ENCODE measurements at regions of chr2 and their contacts with region 1.

Region 1: GRCh38 chr2:19863303-19864041 is 38.3 kb downstream of the TTC32 start:
- DNase-seq: peak; percentile 79 to 93
- ATAC-seq: peak; percentile 89
- H3K4me3 ChIP-seq: no peak overlapping the region
- H3K27ac ChIP-seq: peak overlapping the region in 1 of 2 donors; percentile 9
- H3K4me1 ChIP-seq: no peaks in the 10 kb centered on the region
- H3K27me3 ChIP-seq: no peaks in the 10 kb centered on the region

Region 2: DNA sequence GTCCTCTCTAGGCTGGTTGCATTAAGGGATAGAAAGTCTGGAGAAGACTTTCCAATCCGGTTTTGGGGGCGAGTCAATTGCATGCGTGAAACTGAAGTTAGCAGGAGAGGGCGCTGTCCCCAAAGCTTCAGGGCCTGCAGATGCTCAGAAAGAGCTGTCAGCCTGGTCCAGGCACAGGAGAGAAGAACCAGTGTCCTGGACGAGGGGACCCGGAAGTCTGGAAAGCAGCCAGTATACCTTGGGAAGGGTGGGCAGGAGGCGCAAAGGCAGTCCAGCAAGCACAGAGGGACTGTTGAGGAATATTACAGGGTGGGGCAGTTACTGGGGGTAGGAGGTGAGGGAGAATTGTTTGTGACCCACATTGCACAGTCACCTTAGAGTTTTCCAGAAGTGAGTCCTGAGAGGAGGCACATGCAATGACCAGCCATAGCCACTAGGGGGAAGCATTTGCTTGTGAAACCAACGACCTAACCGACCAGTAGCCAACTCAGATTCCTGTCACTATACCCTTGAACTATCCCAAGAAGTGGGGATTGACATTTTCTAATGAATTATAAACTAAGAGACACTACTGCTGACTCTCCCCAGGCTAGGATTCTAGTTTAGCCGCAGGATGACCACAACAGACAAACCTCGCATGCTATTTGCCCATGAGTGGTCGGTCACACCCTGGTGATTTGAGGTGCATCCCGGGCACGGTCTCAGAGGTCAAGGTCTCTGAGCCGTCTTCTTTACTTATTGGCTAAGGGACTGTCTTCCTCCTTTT is 1475.8 kb before region 1 on chr2:
- intact Hi-C with region 1: loop called in 1 of 2 experiments (anchors 10 kb)
- DNase-seq: peak; percentile 79 to 85
- ATAC-seq: peak; percentile 92
- H3K4me3 ChIP-seq: no peak overlapping the region
- H3K27ac ChIP-seq: peak overlapping the region in 1 of 2 donors; percentile 13
- H3K4me1 ChIP-seq: no peaks in the 10 kb centered on the region
- H3K27me3 ChIP-seq: no peaks in the 10 kb centered on the region

Region 3: DNA sequence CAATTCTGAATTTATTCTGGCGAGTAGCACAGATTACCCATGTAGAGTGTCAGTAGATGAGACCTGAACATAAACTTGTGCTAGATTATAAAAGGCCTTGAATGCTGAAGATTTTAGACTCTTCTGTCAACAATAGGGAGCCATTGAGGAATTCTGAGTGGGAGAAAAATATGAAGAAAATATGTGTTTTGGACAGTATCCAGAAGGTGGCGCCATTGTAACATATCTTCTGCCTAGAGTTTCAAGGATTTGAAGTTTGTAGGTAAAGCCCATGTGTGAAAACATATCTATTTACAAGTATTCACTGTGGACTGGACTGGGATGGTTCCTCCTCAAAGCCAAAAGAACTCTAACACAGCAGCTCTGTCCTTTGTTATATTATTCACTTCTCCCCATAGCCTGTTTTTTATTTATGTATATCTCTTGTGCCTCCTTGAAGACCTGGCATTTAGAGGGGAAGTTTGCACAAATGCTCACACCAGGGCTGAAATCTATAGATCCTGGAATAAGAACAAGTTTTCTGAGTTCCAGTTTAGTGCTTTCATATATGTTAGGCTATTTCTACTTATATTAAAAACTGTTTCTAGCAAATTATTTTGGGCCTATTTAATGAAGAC is 1427.9 kb before region 1 on chr2:
- intact Hi-C with region 1: loop called in 1 of 2 experiments (anchors 10 kb)
- DNase-seq: no peak
- ATAC-seq: peak; percentile 72
- H3K4me3 ChIP-seq: no peak overlapping the region
- H3K27ac ChIP-seq: no peak overlapping the region
- H3K4me1 ChIP-seq: peaks cover 0 to 2% of the 10 kb centered on the region in 2 donors
- H3K27me3 ChIP-seq: no peaks in the 10 kb centered on the region

Region 4: GRCh38 chr2:18749912-18750526 is 1113.5 kb before region 1 on chr2:
- intact Hi-C with region 1: loop called (anchors 2 kb)
- DNase-seq: peak; percentile 56 to 68
- ATAC-seq: peak; percentile 82
- H3K4me3 ChIP-seq: no peak overlapping the region
- H3K27ac ChIP-seq: no peak overlapping the region
- H3K4me1 ChIP-seq: peaks cover 0 to 2% of the 10 kb centered on the region in 2 donors
- H3K27me3 ChIP-seq: no peaks in the 10 kb centered on the region

Region 5: DNA sequence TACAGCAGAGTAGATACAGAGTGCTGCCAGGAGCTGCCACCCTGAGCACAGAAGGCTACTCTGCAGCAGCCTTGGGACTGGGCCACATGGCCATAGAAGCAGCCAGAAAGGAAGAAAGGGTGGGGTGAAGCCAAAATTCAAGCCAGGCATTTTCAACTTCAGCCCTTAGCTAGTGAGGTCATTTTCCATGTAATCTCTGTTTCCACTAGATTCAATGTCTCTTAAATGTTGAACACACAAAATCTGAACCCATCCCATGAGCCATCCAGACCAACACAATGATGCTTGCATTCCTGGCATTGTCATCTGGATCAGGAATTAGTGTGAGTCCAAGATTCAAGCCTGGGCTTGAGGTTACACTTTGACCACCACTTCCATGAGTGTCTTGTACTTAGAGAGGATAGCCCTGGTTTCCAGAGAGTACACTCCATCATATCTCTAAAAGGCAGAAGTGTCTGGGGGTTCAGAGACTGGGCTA is 748.7 kb before region 1 on chr2:
- intact Hi-C with region 1: loop called in 1 of 2 experiments (anchors 10 kb)
- DNase-seq: peak in 1 of 2 donors; percentile 51
- ATAC-seq: no peak
- H3K4me3 ChIP-seq: no peak overlapping the region
- H3K27ac ChIP-seq: no peak overlapping the region
- H3K4me1 ChIP-seq: peaks cover 0 to 3% of the 10 kb centered on the region in 2 donors
- H3K27me3 ChIP-seq: no peaks in the 10 kb centered on the region

Region 6: GRCh38 chr2:19349911-19350677 is 513.4 kb before region 1 on chr2:
- intact Hi-C with region 1: loop called in 1 of 2 experiments (anchors 1 kb)
- DNase-seq: peak; percentile 87 to 95
- ATAC-seq: peak; percentile 65
- H3K4me3 ChIP-seq: no peak overlapping the region
- H3K27ac ChIP-seq: peak overlapping the region; percentile 85 to 92
- H3K4me1 ChIP-seq: peaks cover 0 to 2% of the 10 kb centered on the region in 2 donors
- H3K27me3 ChIP-seq: no peaks in the 10 kb centered on the region

Region 7: GRCh38 chr2:19362755-19363473 is 500.6 kb before region 1 on chr2:
- intact Hi-C with region 1: loop called (anchors 2 to 5 kb)
- DNase-seq: peak; percentile 86 to 93
- ATAC-seq: peak; percentile 79
- H3K4me3 ChIP-seq: peak overlapping the region; percentile 66 to 88
- H3K27ac ChIP-seq: no peak overlapping the region
- H3K4me1 ChIP-seq: no peaks in the 10 kb centered on the region
- H3K27me3 ChIP-seq: no peaks in the 10 kb centered on the region

Region 8: GRCh38 chr2:19525313-19525712 is 338.2 kb before region 1 on chr2:
- intact Hi-C with region 1: no loop called
- DNase-seq: no peak
- ATAC-seq: no peak
- H3K4me3 ChIP-seq: no peak overlapping the region
- H3K27ac ChIP-seq: no peak overlapping the region
- H3K4me1 ChIP-seq: no peaks in the 10 kb centered on the region
- H3K27me3 ChIP-seq: no peaks in the 10 kb centered on the region

Region 9: DNA sequence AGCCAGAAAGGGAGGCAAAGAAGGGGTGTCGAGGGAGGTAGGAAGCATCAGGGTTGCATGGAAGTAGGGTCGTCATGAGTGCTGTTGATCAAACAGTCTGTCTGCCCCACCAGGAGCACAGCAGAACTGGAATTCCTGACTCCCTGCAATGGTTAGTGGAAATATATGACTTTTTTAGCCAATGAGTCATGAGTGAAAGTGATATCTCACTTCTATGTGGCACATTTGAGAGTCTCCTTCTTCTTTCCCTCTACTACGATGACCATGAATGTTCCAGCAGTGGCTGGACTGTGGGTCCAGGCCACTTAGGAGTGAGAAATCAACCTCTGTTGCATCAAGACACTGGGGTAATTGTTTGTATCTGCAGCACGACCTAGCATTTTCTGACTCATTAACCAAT is 161.2 kb before region 1 on chr2:
- intact Hi-C with region 1: no loop called
- DNase-seq: no peak
- ATAC-seq: no peak
- H3K4me3 ChIP-seq: no peak overlapping the region
- H3K27ac ChIP-seq: no peak overlapping the region
- H3K4me1 ChIP-seq: peaks cover 0 to 2% of the 10 kb centered on the region in 2 donors
- H3K27me3 ChIP-seq: no peaks in the 10 kb centered on the region